Sciatic nerve (tissue), 2 donors: ENCODE measurements at regions of chr19 and their contacts with region 1.

Region 1: DNA sequence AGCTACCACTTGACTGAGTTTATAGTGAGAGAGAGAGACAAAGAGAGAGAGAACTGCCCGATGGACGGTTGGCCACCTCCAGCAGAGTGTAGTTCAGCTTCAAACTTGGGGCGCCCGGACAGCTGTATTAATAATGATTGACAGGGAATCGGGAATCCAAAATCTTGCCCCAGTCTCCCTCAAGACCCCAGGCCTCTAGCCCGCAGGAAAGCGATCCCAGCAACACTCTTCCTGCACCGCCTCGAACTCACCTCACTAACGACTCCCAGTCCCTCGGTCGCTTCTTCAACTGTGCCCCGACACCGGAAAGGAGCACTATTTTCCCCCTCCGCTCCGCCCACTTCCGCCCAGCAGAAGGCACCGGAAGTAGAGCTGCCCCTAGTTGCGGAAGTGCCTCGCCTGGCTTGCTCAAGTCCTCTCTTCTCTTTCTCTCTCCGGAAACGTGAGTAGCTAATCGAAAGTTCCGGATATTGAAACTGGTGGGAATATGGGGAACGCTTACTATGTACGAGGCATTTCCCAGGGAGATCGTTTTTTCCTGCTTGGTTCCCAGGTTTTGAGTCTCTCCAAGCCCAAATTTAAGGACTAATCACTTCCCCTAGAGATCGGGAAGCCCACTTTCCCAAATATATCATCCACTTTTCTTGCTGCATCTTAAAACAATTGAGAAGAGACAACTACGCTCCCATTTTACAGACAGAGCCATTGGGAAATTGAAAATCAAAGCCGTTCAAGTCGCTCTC is at the start of gene NOSIP:
- DNase-seq: peak; percentile 97
- ATAC-seq: peak; percentile 98
- total RNA-seq, gene NOSIP: 41.7 TPM

Region 2: DNA sequence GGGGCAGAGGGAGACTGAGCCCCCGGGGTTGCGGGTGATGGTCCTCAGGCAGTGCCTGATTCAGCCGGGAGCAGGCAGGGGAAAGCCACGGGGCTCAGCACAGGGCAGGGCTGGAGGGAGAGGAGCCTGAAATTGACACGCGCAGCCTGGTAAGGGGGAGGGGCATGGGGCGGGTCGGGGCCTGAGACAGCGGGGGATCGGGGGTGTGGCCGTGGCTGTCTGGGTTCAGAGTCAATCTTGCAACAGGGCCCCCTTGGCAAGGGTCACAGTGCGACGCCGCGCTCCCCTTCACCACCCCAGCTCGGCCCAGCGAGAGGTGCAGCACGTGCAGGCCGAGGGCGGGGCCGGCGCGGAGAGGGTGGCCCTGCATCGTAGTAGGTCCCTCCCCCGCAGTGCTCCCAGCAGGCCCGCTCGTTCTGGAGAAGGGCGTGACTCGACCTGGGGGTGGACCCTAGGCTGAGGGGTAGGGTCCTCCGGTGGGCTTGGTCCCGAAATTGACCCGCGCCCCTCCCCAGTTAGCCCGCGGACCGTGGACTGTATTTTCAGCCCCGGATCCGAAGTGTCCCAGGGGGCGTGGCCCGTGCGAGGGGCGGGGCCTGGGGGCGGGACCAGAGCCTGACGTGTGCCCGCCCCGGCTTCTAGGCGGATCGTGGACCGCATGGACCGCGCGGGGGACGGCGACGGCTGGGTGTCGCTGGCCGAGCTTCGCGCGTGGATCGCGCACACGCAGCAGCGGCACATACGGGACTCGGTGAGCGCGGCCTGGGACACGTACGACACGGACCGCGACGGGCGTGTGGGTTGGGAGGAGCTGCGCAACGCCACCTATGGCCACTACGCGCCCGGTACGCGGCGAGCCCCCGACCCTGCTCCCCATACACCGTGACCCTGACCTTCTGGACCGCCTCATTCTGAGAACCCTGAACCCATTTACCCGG is 46.6 kb before region 1 on chr19:
- intact Hi-C with region 1: no loop called
- DNase-seq: peak; percentile 91
- ATAC-seq: peak; percentile 95

Region 3: DNA sequence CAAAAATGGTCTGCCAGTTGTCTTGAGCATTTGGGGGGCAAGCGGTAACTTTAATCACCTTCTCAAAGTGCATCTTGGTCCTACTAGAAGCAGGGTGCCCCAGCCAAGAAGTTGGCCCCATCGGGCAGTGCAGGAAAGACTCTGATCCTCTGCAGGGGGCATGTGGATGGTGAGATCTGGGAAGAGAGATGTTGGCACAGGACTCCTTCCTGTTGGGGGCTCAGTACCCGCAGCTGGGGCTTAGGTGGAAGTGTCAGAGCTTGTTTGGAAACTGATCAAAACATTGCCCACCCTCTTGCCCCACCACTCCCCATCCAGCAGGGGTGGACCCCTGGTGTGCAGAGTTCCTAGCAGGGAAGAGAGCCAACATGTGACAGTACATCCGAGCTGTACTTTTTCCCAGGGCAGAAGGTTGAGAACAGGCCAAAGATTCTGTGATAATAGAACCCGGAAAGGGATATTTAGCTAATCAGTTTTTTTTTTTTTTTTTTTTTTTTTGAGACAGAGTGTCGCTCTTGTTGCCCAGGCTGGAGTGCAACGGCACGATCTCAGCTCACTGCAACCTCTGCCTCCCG is 50.7 kb after region 1 on chr19:
- intact Hi-C with region 1: no loop called
- DNase-seq: no peak
- ATAC-seq: no peak

Region 4: DNA sequence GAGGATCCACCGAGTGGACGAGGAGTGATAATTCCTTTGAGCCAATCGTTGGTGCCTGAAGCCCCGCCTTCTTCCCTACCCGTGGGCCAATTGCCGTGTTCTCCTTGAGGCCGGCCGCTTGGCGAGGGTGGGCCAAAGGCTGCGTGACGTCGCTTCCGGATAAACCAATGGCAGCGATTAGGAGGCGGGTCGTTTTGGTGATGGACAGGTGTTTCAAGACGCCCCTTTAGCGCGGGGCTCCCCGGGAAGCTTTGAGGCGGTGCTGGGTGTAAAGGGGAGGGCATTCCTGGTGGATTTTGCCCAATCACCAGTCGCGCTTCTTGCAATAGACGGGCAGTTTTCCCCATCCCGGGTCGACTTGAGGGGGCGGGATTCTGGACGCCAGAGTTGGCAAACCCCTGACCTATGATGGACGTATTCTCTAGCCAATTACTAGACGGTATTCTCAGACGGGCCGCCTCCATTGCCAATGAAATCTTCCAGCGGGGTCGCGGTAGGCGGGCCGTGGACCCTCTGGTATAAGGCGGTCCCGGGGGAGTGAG is 96.3 kb after region 1 on chr19:
- intact Hi-C with region 1: loop called (anchors 10 kb)
- DNase-seq: peak; percentile 100
- ATAC-seq: peak; percentile 92